CD8-positive, alpha-beta T cell (primary cell): ENCODE measurements at regions of chr11 and their contacts with region 1.

Region 1: GRCh38 chr11:122749005-122749687 is 89.2 kb upstream of the CRTAM start:
- DNase-seq: peak in 8 of 9 experiments; percentile 25 to 67 (median 51)
- ATAC-seq: peak; percentile 52
- H3K4me3 ChIP-seq: no peak overlapping the region
- H3K4me3 Mint-ChIP-seq: no peak overlapping the region
- H3K27ac ChIP-seq: no peak overlapping the region
- H3K27ac Mint-ChIP-seq: peak overlapping the region; percentile 71
- H3K4me1 ChIP-seq: peaks cover 60% of the 10 kb centered on the region
- H3K4me1 Mint-ChIP-seq: peaks cover 36% of the 10 kb centered on the region
- H3K27me3 ChIP-seq: no peaks in the 10 kb centered on the region
- H3K27me3 Mint-ChIP-seq: no peaks in the 10 kb centered on the region
- CTCF ChIP-seq: no peak

Region 2: GRCh38 chr11:122421699-122422098 is 327.4 kb before region 1 on chr11:
- CTCF ChIA-PET with region 1: no interaction called
- POLR2A ChIA-PET with region 1: no interaction called
- intact Hi-C with region 1: no loop called
- DNase-seq: no peak
- ATAC-seq: no peak
- H3K4me3 ChIP-seq: no peak overlapping the region
- H3K4me3 Mint-ChIP-seq: no peak overlapping the region
- H3K27ac ChIP-seq: no peak overlapping the region
- H3K27ac Mint-ChIP-seq: no peak overlapping the region
- H3K4me1 ChIP-seq: no peaks in the 10 kb centered on the region
- H3K4me1 Mint-ChIP-seq: no peaks in the 10 kb centered on the region
- H3K27me3 ChIP-seq: no peaks in the 10 kb centered on the region
- H3K27me3 Mint-ChIP-seq: peaks cover 4% of the 10 kb centered on the region
- CTCF ChIP-seq: no peak

Region 3: GRCh38 chr11:122727101-122727929 is 21.8 kb before region 1 on chr11:
- CTCF ChIA-PET with region 1: interaction called, 29 read pairs
- POLR2A ChIA-PET with region 1: interaction called, 10 read pairs
- intact Hi-C with region 1: loop called in 1 of 2 experiments (anchors 1 kb)
- DNase-seq: peak in 8 of 9 experiments; percentile 6 to 67 (median 39)
- ATAC-seq: peak; percentile 74
- H3K4me3 ChIP-seq: peak overlapping the region; percentile 3 to 28
- H3K4me3 Mint-ChIP-seq: peak overlapping the region; percentile 80
- H3K27ac ChIP-seq: peak overlapping the region; percentile 56 to 74
- H3K27ac Mint-ChIP-seq: peak overlapping the region; percentile 98
- H3K4me1 ChIP-seq: peaks cover 66% of the 10 kb centered on the region
- H3K4me1 Mint-ChIP-seq: peaks cover 80% of the 10 kb centered on the region
- H3K27me3 ChIP-seq: no peaks in the 10 kb centered on the region
- H3K27me3 Mint-ChIP-seq: no peaks in the 10 kb centered on the region
- CTCF ChIP-seq: no peak